ENCODE measurements at regions of chr22 and their contacts with region 1.

Region 1: GRCh38 chr22:31661851-31662656 is at the start of gene PISD:
- DNase-seq: peak; percentile 98
- H3K4me3 Mint-ChIP-seq: peak within 1 kb of the TSS; percentile 91
- H3K27ac Mint-ChIP-seq: peak within 1 kb of the TSS; percentile 91
- H3K4me1 Mint-ChIP-seq: peaks cover 37% of the 10 kb centered on the region
- H3K27me3 Mint-ChIP-seq: no peaks in the 10 kb centered on the region
- total RNA-seq, gene PISD: 19.2 to 19.6 TPM

Region 2: DNA sequence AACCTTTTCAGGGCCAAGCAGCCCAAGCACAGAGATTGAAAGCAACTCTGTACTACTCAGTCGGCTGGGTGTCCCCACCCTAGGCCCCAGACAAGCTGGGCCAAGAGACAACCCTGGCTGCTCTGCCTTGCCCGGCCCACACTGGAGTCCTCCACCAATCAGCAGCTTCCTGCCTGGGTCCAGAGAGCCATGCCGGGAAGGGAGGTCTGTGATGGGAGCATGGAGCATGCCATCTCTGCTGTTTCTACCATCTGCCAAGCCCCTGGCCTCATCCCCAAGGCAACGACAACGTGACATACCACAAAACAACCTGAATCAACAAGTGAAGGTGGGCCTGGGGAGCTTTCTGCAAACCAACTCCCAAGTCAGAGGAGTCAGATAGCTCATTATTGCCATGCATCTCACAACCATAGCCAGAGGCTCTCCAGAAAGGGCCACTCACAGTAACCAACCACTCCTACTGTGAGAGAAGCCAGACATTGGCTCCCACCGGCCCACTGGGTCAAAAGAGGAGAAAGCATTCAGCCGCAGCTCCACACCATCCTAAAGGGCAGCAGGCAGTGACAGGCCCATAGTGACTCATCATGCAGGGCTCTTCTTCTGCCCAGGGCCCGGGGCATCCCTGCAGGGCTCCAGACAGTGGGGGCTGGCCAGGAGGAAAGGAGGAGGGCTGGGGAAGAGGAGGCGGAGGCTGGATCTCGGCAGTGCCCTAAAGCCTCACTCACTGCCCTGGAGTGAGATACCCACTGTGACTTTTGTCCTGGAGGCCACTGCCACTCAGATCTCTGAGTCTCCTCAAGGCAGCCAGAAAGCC is 334.0 kb before region 1 on chr22:
- CTCF ChIA-PET with region 1: no interaction called
- POLR2A ChIA-PET with region 1: no interaction called
- DNase-seq: no peak
- H3K4me3 Mint-ChIP-seq: no peak overlapping the region
- H3K27ac Mint-ChIP-seq: no peak overlapping the region
- H3K4me1 Mint-ChIP-seq: peaks cover 18% of the 10 kb centered on the region
- H3K27me3 Mint-ChIP-seq: no peaks in the 10 kb centered on the region

Region 3: DNA sequence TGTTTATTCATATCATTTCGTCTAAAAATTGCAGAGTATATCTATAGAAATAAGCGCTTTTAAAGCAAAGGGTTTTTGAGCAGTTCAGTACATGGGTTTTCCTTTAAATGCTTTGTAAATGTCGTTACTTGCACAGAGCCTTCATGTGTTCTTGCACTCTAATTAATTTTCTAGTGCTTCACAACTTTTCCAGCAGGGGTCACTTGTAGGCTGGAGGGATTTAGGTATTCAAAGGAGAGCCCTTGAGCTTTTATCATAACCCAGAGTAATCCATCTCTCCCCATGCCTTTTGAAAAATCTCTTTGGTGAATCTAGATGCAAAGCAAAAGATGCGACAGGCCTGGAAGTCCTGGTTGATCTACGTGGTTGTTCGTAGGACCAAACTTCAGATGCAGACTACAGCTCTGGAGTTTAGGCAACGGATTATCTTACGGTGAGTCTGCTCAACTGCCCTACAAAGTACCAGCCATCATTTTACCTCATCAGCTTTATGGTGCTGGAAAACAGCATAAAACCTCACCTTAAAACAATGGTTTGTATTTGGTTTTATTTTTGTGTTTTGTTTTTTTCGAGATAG is 105.3 kb before region 1 on chr22:
- CTCF ChIA-PET with region 1: interaction called, 12 read pairs
- POLR2A ChIA-PET with region 1: no interaction called
- DNase-seq: no peak
- H3K4me3 Mint-ChIP-seq: no peak overlapping the region
- H3K27ac Mint-ChIP-seq: peak overlapping the region; percentile 44
- H3K4me1 Mint-ChIP-seq: peaks cover 19% of the 10 kb centered on the region
- H3K27me3 Mint-ChIP-seq: no peaks in the 10 kb centered on the region

Region 4: GRCh38 chr22:31676700-31677099 is 14.6 kb after region 1 on chr22:
- CTCF ChIA-PET with region 1: interaction called, 54 read pairs
- POLR2A ChIA-PET with region 1: interaction called, 37 read pairs
- DNase-seq: peak; percentile 95
- H3K4me3 Mint-ChIP-seq: peak overlapping the region; percentile 88
- H3K27ac Mint-ChIP-seq: peak overlapping the region; percentile 89
- H3K4me1 Mint-ChIP-seq: peaks cover 24% of the 10 kb centered on the region
- H3K27me3 Mint-ChIP-seq: no peaks in the 10 kb centered on the region

Region 5: GRCh38 chr22:31749636-31750364 is 87.7 kb after region 1 on chr22 and contains the start of gene PRR14L:
- CTCF ChIA-PET with region 1: interaction called, 8 read pairs
- POLR2A ChIA-PET with region 1: interaction called, 30 read pairs
- DNase-seq: peak; percentile 98
- H3K4me3 Mint-ChIP-seq: peak within 1 kb of the TSS; percentile 91
- H3K27ac Mint-ChIP-seq: peak within 1 kb of the TSS; percentile 86
- H3K4me1 Mint-ChIP-seq: peaks cover 61% of the 10 kb centered on the region
- H3K27me3 Mint-ChIP-seq: no peaks in the 10 kb centered on the region
- total RNA-seq, gene PRR14L: 56.3 to 61.3 TPM

Region 6: GRCh38 chr22:31952459-31952858 is 290.4 kb after region 1 on chr22:
- CTCF ChIA-PET with region 1: interaction called, 49 read pairs
- POLR2A ChIA-PET with region 1: interaction called, 8 read pairs
- DNase-seq: no peak
- H3K4me3 Mint-ChIP-seq: no peak overlapping the region
- H3K27ac Mint-ChIP-seq: peak overlapping the region; percentile 55
- H3K4me1 Mint-ChIP-seq: peaks cover 82% of the 10 kb centered on the region
- H3K27me3 Mint-ChIP-seq: no peaks in the 10 kb centered on the region

Measured in activated CD4-positive, alpha-beta memory T cell treated with anti-CD3 and anti-CD28 coated beads, Interleukin-2, amount 10 ng/mL, durations not matched to agents 7 days and 5 days (primary cell).